ENCODE measurements at regions of chr16 and their contacts with region 1.

Region 1: GRCh38 chr16:30984669-30985400 is at the start of gene HSD3B7:
- DNase-seq: no peak
- ATAC-seq: peak; percentile 95
- H3K4me3 ChIP-seq: no peak within 1 kb of the TSS
- H3K27ac ChIP-seq: no peak within 1 kb of the TSS
- H3K4me1 ChIP-seq: no peaks in the 10 kb centered on the region
- H3K27me3 ChIP-seq: no peaks in the 10 kb centered on the region
- CTCF ChIP-seq: peak; percentile 85 to 97 (median 92)
- EP300 ChIP-seq: no peak
- POLR2A ChIP-seq: peak; percentile 55
- RAD21 ChIP-seq: peak; percentile 89
- polyA plus RNA-seq, gene HSD3B7: 0.18 to 0.40 TPM

Region 2: DNA sequence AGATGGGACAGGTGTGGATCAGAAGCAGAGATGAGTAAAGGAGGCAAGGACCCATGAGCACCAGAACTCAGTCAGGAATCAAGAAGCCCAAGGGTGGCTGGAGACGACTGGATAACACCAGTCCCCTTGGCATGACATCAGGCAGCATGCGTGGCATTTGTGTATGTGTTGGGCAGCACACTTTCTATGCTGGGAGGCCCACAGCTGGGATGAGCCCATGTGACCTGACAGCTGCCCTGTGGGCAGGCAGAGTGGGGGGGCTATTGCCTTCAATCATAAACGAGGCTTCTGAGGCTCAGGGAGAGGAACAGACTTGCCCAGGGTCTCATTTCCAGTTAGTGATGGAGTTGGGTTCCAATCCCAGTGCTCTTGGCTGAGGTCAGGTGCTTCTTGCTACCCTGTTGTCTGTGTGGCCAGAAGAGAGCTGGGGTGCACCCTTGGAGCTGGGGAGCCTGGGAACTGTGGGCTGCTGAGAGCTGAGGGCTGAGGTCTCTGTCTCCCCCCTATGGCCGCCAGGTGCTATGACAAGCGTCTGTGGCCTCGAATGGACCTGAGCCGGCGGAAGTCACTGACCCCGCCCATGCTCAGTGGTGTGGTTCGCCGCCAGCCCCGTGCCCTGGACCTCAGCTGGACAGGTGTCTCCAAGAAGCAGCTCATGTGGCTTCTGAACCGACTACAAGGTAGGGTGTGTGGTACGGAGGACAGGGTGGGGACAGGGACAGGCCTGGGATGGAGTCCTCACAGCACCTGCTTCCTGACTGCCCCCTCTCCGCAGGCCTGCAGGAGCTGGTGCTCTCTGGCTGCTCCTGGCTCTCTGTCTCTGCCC is 43.0 kb before region 1 on chr16:
- CTCF ChIA-PET with region 1: no interaction called
- POLR2A ChIA-PET with region 1: no interaction called
- RAD21 ChIA-PET with region 1: no interaction called
- SMC1A ChIA-PET with region 1: no interaction called
- in situ Hi-C with region 1: no loop called
- intact Hi-C with region 1: no loop called
- DNase-seq: no peak
- ATAC-seq: peak; percentile 99
- H3K4me3 ChIP-seq: no peak overlapping the region
- H3K27ac ChIP-seq: no peak overlapping the region
- H3K4me1 ChIP-seq: peaks cover 9% of the 10 kb centered on the region
- H3K27me3 ChIP-seq: no peaks in the 10 kb centered on the region
- CTCF ChIP-seq: peak; percentile 94 to 99 (median 95)
- EP300 ChIP-seq: no peak
- POLR2A ChIP-seq: no peak
- RAD21 ChIP-seq: peak; percentile 67

Region 3: DNA sequence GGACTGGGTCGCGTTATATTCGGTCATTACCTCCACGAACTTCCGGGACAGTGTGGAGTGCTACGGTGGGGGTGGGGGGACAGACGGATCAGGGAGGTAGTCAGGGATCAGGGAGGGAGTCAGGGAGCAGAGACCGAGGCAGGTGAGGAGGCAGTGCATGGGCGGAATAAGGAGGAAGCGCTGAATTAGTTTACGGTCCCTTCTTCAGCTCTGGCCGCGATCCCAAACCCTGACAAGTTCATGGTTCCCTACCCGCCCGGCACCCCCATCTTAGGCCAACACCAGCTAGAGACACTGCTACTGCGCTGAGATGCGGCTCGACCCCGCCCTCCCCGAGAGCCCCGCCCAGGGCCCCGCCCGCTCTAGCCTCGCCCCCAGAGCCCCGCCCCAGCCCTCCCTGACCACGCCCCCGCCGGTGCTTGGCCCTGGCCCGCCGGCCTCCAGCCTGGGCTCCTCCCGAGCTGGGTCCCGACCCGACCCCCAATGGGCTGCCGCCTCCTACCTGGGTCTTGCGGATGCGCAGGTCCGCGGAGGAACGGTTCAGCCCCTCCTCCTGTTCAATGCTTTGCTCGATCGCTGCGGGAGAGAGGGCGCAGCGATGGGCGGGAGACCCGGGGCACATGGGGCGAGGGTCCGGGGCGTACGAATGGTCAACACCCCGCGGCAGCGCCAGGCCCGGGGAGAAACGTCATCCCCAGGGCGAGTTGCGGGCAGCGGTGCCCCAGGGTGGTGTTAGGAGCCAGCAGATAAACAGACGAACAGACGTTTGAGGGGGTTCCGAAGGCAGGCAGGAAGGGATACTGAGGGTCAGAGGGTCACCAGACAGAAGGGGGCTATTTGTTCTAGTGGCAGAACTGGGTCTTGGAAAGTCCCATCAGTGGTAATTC is 12.4 kb after region 1 on chr16:
- CTCF ChIA-PET with region 1: interaction called, 16 read pairs
- POLR2A ChIA-PET with region 1: interaction called, 4 read pairs
- RAD21 ChIA-PET with region 1: interaction called, 7 read pairs
- SMC1A ChIA-PET with region 1: interaction called, 4 read pairs
- in situ Hi-C with region 1: no loop called
- intact Hi-C with region 1: no loop called
- DNase-seq: peak; percentile 51
- ATAC-seq: peak; percentile 90
- H3K4me3 ChIP-seq: peak overlapping the region; percentile 97
- H3K27ac ChIP-seq: peak overlapping the region; percentile 82
- H3K4me1 ChIP-seq: peaks cover 17% of the 10 kb centered on the region
- H3K27me3 ChIP-seq: no peaks in the 10 kb centered on the region; a peak in 1 of 4 replicates
- CTCF ChIP-seq: no peak
- EP300 ChIP-seq: no peak
- POLR2A ChIP-seq: peak; percentile 85
- RAD21 ChIP-seq: no peak

Region 4: DNA sequence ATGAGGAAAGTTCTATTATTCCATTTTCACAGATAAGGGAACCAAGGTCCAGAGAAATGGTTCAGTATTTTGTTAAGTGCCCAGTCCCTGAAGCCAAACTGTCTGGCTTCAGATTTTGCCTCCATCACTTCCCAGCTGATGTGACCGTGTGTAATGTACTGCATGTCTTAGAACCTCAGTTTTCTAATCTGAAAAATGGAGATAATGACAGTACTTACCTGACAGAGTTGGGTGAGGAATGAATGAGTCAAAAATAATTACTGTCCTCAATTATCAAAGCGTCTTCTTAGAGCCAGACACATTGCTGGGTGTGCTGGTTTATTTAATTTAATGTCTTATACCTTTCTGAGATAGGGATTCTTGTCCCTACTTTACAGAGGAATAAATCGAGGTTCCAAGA is 82.5 kb after region 1 on chr16:
- CTCF ChIA-PET with region 1: interaction called, 13 read pairs
- POLR2A ChIA-PET with region 1: no interaction called
- RAD21 ChIA-PET with region 1: no interaction called
- SMC1A ChIA-PET with region 1: interaction called, 10 read pairs
- in situ Hi-C with region 1: no loop called
- intact Hi-C with region 1: loop called (anchors 10 kb)
- DNase-seq: no peak
- ATAC-seq: no peak
- H3K4me3 ChIP-seq: no peak overlapping the region
- H3K27ac ChIP-seq: no peak overlapping the region
- H3K4me1 ChIP-seq: peaks cover 3% of the 10 kb centered on the region; the same call in 1 of the 2 replicates
- H3K27me3 ChIP-seq: no peaks in the 10 kb centered on the region
- CTCF ChIP-seq: no peak
- EP300 ChIP-seq: no peak
- POLR2A ChIP-seq: no peak
- RAD21 ChIP-seq: no peak

Region 5: GRCh38 chr16:31094424-31095120 is 109.7 kb after region 1 on chr16 and contains the start of gene VKORC1:
- CTCF ChIA-PET with region 1: interaction called, 15 read pairs
- POLR2A ChIA-PET with region 1: no interaction called
- RAD21 ChIA-PET with region 1: interaction called, 5 read pairs
- SMC1A ChIA-PET with region 1: interaction called, 11 read pairs
- in situ Hi-C with region 1: loop called (anchors 5 kb)
- intact Hi-C with region 1: loop called (anchors 2 kb)
- DNase-seq: peak; percentile 87
- ATAC-seq: peak; percentile 89
- H3K4me3 ChIP-seq: peak within 1 kb of the TSS; percentile 99
- H3K27ac ChIP-seq: peak within 1 kb of the TSS; percentile 81
- H3K4me1 ChIP-seq: peaks cover 8% of the 10 kb centered on the region
- H3K27me3 ChIP-seq: no peaks in the 10 kb centered on the region
- CTCF ChIP-seq: no peak
- EP300 ChIP-seq: no peak
- POLR2A ChIP-seq: peak; percentile 79
- RAD21 ChIP-seq: no peak
- polyA plus RNA-seq, gene VKORC1: 19.8 to 39.0 TPM

Region 6: DNA sequence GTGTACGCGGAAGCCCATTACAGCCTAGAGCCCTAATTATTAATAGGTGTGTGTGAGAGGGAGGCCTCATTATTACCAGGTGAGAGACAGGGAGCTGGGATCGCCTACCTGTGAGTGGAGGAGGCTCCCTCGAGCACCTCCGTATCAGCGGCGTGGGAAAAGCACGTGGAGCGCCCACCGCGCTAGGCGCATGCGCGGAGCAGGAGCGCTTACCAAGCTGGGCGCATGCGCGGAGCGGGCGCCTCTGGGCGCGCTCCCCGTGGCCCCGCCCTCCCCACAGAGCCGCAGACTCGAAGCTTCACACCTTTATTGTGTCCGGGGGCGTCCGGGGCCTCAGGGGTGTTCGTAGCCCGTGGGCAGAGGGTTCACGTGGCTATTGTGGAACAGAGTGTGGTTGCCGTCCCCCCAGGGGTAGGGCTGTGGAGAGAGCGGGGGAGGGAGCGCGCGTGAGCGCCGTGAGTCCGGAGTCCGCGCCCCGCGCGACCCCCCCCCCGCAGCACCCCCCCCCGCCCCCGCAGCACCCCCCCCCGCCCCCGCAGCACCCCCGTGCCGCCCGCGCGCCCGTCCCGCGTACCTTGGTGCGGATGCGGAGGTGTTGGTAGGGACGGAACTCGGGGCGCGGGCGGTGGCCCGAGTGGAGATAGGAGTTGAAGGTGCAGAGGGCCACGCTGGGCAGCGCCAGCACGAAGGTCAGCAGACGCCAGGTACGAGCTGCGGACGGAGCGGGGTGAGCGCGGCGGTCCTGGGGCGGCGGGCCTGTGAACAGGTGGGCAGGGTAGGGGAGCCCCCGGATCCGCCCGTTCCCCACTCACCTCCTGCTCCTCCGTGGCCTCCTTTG is 442.8 kb after region 1 on chr16:
- CTCF ChIA-PET with region 1: no interaction called
- POLR2A ChIA-PET with region 1: no interaction called
- RAD21 ChIA-PET with region 1: no interaction called
- SMC1A ChIA-PET with region 1: no interaction called
- in situ Hi-C with region 1: loop called (anchors 25 kb)
- intact Hi-C with region 1: no loop called
- DNase-seq: no peak
- ATAC-seq: no peak
- H3K4me3 ChIP-seq: no peak overlapping the region
- H3K27ac ChIP-seq: no peak overlapping the region
- H3K4me1 ChIP-seq: peaks cover under 1% of the 10 kb centered on the region
- H3K27me3 ChIP-seq: no peaks in the 10 kb centered on the region
- CTCF ChIP-seq: no peak
- EP300 ChIP-seq: no peak
- POLR2A ChIP-seq: no peak
- RAD21 ChIP-seq: no peak

Measured in GM12878 (cell line).